ENCODE measurements at regions of chr21 and their contacts with region 1.

Region 1: GRCh38 chr21:41885341-41886029 is 6.3 kb upstream of the PRDM15 start:
- DNase-seq: no peak
- H3K4me3 ChIP-seq: no peak overlapping the region
- H3K27ac ChIP-seq: no peak overlapping the region
- H3K4me1 ChIP-seq: no peaks in the 10 kb centered on the region
- H3K27me3 ChIP-seq: no peaks in the 10 kb centered on the region
- CTCF ChIP-seq: no peak
- EP300 ChIP-seq: no peak
- POLR2A ChIP-seq: no peak

Region 2: DNA sequence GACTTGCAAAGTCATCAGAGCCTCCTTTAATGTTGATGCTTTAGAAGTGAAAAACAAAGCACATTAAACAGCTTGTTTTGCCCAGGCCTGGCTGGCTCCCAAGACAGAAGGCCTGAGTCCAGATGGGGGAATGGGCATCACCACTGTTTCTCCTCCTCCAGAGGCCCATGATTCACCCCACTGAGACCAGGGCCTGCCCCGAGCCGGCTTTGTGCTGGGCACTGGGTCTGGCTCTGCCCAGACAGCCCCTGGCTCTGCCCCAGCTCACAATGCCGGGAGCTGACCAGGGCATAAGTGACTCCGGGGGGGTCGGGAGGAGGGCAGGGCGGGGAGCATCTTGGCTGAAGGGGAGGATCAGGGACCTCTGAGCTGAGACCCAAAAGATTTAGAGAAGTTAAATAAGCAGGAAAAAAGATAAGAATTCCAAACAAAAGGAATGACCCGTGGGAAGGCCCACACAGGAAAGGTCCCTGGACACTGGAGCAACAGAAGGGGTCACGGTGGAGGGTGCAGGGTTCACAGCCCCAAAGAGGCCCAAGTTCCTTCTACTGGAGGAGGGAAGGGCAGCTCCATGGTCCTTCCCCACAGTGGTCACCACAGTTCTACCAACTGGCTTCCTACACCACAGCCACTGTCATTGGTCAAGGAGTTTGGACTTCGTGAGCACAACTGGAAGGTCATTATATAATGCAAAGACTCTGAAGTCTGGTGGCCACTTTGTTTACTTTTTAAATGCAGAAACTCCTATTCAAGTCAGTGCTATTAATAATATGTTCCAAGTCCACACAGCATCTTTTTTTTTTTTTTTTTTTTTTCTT is 62.8 kb after region 1 on chr21:
- intact Hi-C with region 1: loop called (anchors 2 kb)
- DNase-seq: no peak
- H3K4me3 ChIP-seq: no peak overlapping the region
- H3K27ac ChIP-seq: peak overlapping the region in 2 of 4 donors; percentile 50 to 55
- H3K4me1 ChIP-seq: peaks cover 22 to 59% (median 49%) of the 10 kb centered on the region in 4 donors
- H3K27me3 ChIP-seq: no peaks in the 10 kb centered on the region
- CTCF ChIP-seq: no peak
- EP300 ChIP-seq: no peak
- POLR2A ChIP-seq: no peak

Region 3: DNA sequence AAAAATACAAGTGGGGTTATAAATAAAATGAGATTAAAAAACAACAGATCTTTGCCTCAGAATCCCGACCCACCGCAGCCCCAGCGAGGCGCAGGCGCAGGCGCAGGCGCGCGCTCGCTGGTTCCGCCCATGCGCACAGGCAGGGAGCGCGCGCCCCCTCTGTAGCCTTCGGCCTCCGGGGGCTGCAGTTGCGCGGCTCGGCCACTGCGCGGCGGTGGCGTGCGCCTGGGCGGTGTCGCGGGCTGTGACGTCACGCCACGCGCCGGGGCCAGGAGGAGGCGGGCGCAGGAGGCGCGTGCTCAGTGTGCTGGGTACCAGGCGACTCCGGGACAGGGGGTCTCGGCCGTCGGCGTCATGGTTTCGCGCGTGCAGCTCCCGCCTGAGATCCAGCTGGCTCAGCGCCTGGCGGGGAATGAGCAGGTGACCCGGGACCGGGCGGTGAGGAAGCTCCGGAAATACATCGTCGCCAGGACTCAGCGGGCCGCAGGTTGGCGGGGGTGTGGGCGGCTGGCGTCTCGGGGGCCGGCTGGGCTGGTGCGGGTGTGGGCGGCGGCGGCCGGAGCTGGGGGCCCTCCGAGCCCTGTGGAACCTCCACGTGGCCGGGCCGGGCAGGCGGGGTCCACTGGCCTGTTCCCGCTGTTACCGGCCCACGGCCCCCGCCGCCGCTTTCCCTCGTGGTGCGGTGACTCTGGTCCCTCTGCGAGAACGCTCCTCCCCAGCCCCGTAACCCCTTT is 1904.0 kb after region 1 on chr21 and contains the start of gene RRP1:
- intact Hi-C with region 1: no loop called
- DNase-seq: peak; percentile 96
- H3K4me3 ChIP-seq: peak within 1 kb of the TSS; percentile 86 to 96 (median 95)
- H3K27ac ChIP-seq: peak within 1 kb of the TSS; percentile 85 to 90 (median 87)
- H3K4me1 ChIP-seq: peaks cover 12 to 26% (median 23%) of the 10 kb centered on the region in 4 donors
- H3K27me3 ChIP-seq: no peaks in the 10 kb centered on the region
- CTCF ChIP-seq: peak in 2 of 3 experiments; percentile 100
- EP300 ChIP-seq: no peak
- POLR2A ChIP-seq: no peak
- total RNA-seq, gene RRP1: 9.1 to 18.9 (median 16.3) TPM